ENCODE measurements at regions of chr5 and their contacts with region 1.

Region 1: DNA sequence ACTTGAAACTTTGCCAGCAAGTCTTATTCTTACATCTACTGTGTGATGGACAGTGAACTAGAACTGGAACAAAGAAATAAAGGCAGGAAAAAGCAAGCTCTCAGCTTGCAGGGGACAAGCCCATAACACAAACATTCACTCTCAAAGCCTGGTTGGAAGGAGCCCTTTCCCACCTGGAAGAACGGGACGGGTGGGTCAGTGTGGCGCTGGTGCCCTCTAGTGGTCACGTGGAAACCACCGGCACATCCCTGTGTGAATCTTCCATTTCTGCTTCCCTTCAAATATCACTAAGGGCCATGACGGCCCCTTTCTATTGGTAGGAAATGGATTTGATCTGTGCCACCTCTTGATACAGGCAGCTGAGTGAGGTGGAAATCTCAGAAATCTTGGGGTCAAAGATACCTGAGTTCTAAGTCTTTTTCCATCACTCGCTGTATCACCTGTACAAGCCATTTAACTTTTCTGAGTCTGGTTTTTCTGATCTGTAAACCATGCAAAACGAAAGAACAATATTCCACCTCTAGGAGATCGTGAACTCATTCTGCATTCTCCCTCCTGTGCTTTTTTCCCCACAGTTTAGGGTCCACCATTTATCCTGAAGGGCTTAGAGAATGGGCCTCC is 211.6 kb downstream of the MSX2 start:
- DNase-seq: peak; percentile 80
- H3K4me3 ChIP-seq: peak overlapping the region in 1 of 2 experiments; percentile 30; a peak in 1 of 4 replicates
- H3K27ac ChIP-seq: no peak overlapping the region
- H3K4me1 ChIP-seq: no peaks in the 10 kb centered on the region; a peak in 1 of 4 replicates
- H3K27me3 ChIP-seq: no peaks in the 10 kb centered on the region
- CTCF ChIP-seq: peak; percentile 87
- EP300 ChIP-seq: no peak
- RAD21 ChIP-seq: peak; percentile 88

Region 2: GRCh38 chr5:174751154-174752000 is 184.6 kb before region 1 on chr5:
- CTCF ChIA-PET with region 1: no interaction called
- POLR2A ChIA-PET with region 1: no interaction called
- DNase-seq: peak; percentile 87
- H3K4me3 ChIP-seq: peak overlapping the region; percentile 53 to 71
- H3K27ac ChIP-seq: peak overlapping the region in 1 of 2 experiments; percentile 64; a peak in 2 of 4 replicates
- H3K4me1 ChIP-seq: no peaks in the 10 kb centered on the region; a peak in 1 of 4 replicates
- H3K27me3 ChIP-seq: peaks cover 5% of the 10 kb centered on the region; the same call in 1 of the 2 replicates
- CTCF ChIP-seq: no peak
- EP300 ChIP-seq: no peak
- RAD21 ChIP-seq: no peak

Region 3: GRCh38 chr5:174910245-174910737 is 25.7 kb before region 1 on chr5:
- CTCF ChIA-PET with region 1: interaction called, 69 read pairs
- POLR2A ChIA-PET with region 1: no interaction called
- DNase-seq: peak; percentile 90
- H3K4me3 ChIP-seq: peak overlapping the region in 1 of 2 experiments; percentile 43; a peak in 1 of 4 replicates
- H3K27ac ChIP-seq: no peak overlapping the region
- H3K4me1 ChIP-seq: no peaks in the 10 kb centered on the region
- H3K27me3 ChIP-seq: no peaks in the 10 kb centered on the region
- CTCF ChIP-seq: peak; percentile 75
- EP300 ChIP-seq: no peak
- RAD21 ChIP-seq: peak; percentile 86

Region 4: DNA sequence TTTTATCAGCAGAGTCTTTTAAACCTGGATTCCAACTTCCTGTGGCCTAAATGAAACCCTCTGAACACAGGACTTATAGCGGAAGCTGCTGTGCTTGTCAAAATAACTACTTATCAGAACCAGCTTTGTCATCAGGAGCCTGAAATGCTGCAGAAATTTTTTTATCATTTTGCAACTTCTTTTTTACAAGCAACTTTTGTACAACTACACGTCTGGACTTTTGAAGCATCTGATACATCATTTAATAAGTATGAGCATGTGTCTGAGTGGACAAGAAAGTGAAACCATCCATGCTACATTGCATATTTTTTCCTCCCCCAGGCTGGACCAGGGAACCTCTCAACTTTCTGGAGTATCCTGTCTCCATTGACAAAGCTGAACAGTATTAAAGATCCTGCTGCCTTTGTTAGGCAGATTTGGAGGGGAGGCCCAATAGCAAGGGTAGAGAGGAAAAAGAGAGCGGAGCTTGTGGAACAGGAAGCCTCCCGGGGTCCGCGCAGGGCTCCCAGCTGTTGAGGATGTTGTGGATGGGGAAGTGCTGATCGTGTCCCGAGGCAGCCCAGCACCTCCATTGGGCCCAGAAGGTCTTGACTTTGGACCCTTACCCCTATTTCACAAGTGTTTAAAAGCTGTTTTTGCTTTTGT is 14.9 kb before region 1 on chr5:
- CTCF ChIA-PET with region 1: interaction called, 11 read pairs
- POLR2A ChIA-PET with region 1: no interaction called
- DNase-seq: no peak
- H3K4me3 ChIP-seq: no peak overlapping the region
- H3K27ac ChIP-seq: no peak overlapping the region
- H3K4me1 ChIP-seq: no peaks in the 10 kb centered on the region
- H3K27me3 ChIP-seq: no peaks in the 10 kb centered on the region
- CTCF ChIP-seq: no peak
- EP300 ChIP-seq: no peak
- RAD21 ChIP-seq: no peak

Region 5: GRCh38 chr5:174951146-174951780 is 15.3 kb after region 1 on chr5:
- CTCF ChIA-PET with region 1: interaction called, 14 read pairs
- POLR2A ChIA-PET with region 1: no interaction called
- DNase-seq: peak; percentile 75
- H3K4me3 ChIP-seq: no peak overlapping the region; a peak in 1 of 4 replicates
- H3K27ac ChIP-seq: no peak overlapping the region
- H3K4me1 ChIP-seq: no peaks in the 10 kb centered on the region
- H3K27me3 ChIP-seq: no peaks in the 10 kb centered on the region
- CTCF ChIP-seq: peak; percentile 87
- EP300 ChIP-seq: no peak
- RAD21 ChIP-seq: peak; percentile 94

Region 6: GRCh38 chr5:175772747-175773533 is 837.0 kb after region 1 on chr5:
- CTCF ChIA-PET with region 1: no interaction called
- POLR2A ChIA-PET with region 1: no interaction called
- DNase-seq: no peak
- H3K4me3 ChIP-seq: no peak overlapping the region
- H3K27ac ChIP-seq: no peak overlapping the region
- H3K4me1 ChIP-seq: no peaks in the 10 kb centered on the region
- H3K27me3 ChIP-seq: no peaks in the 10 kb centered on the region
- CTCF ChIP-seq: no peak
- EP300 ChIP-seq: no peak
- RAD21 ChIP-seq: no peak